Gastrocnemius medialis (tissue), 4 donors: ENCODE measurements at regions of chr3 and their contacts with region 1.

Region 1: DNA sequence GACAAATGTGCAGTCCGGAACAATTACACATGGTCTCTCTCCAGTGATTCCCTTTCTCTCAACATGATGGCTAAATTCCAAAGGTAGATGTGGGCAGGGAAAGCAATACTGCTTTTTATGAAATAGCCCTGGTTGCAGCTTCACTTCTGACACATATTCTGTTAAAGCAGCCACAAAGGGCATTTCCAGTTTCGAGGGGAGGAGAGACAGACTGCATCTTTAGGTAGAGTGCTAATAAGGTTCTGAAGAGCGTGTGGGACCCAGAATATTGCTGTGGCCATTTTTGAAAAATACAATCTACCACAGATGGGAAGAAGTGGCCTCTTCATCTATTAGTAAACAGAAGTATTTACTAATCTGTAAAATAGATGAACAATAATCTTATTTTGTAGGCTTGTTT is 139.3 kb upstream of the PEX5L start:
- DNase-seq: no peak
- ATAC-seq: no peak
- H3K4me3 ChIP-seq: no peak overlapping the region
- H3K27ac ChIP-seq: no peak overlapping the region
- H3K4me1 ChIP-seq: no peaks in the 10 kb centered on the region
- H3K27me3 ChIP-seq: no peaks in the 10 kb centered on the region
- CTCF ChIP-seq: no peak
- POLR2A ChIP-seq: no peak

Region 2: GRCh38 chr3:179969525-179969924 is 206.5 kb before region 1 on chr3:
- in situ Hi-C with region 1: no loop called
- intact Hi-C with region 1: no loop called
- DNase-seq: no peak
- ATAC-seq: no peak
- H3K4me3 ChIP-seq: no peak overlapping the region
- H3K27ac ChIP-seq: no peak overlapping the region
- H3K4me1 ChIP-seq: no peaks in the 10 kb centered on the region
- H3K27me3 ChIP-seq: no peaks in the 10 kb centered on the region
- CTCF ChIP-seq: no peak
- POLR2A ChIP-seq: no peak

Region 3: DNA sequence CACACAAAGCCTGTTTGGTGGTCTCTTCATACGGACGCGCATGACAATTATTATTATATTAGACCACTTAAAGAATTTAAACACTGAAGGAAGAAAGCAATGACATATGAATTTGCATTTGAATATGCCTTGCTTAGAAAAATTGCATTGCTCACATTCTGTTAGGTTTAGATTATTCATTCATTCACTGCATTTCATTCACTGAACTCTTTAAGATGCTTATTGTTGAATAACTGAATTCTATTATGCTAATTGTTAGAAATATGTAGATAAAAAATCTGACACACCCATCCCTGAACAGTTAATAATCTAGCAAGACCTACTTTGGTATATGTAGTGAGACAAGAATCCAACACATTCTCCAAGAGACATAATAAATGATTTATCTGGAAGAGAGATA is 44.9 kb before region 1 on chr3:
- in situ Hi-C with region 1: no loop called
- intact Hi-C with region 1: loop called (anchors 2 kb)
- DNase-seq: no peak
- ATAC-seq: no peak
- H3K4me3 ChIP-seq: no peak overlapping the region
- H3K27ac ChIP-seq: no peak overlapping the region
- H3K4me1 ChIP-seq: no peaks in the 10 kb centered on the region
- H3K27me3 ChIP-seq: no peaks in the 10 kb centered on the region
- CTCF ChIP-seq: no peak
- POLR2A ChIP-seq: no peak

Region 4: DNA sequence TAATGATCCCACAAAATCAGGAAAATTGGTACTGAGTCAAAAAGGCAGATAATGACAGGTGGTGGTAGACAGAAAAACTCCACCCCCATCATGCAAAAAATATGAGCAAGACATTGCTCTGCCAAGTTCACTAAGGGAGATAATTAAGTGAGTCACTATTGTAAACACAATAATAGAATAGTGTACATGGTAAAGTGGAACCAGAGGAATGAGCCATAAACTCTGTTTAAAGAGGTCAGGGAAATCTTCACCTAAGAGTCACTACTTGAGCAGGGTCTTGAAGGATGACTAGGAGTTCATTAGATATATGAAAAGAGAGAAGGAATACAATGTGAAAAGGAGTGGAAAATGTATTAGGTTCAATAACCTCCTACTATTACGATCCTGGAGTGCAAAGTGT is 74.1 kb after region 1 on chr3:
- in situ Hi-C with region 1: no loop called
- intact Hi-C with region 1: no loop called
- DNase-seq: no peak
- ATAC-seq: no peak
- H3K4me3 ChIP-seq: no peak overlapping the region
- H3K27ac ChIP-seq: no peak overlapping the region
- H3K4me1 ChIP-seq: no peaks in the 10 kb centered on the region
- H3K27me3 ChIP-seq: no peaks in the 10 kb centered on the region
- CTCF ChIP-seq: no peak
- POLR2A ChIP-seq: no peak

Region 5: GRCh38 chr3:180278583-180279188 is 102.6 kb after region 1 on chr3:
- in situ Hi-C with region 1: no loop called
- intact Hi-C with region 1: no loop called
- DNase-seq: no peak
- ATAC-seq: no peak
- H3K4me3 ChIP-seq: no peak overlapping the region
- H3K27ac ChIP-seq: no peak overlapping the region
- H3K4me1 ChIP-seq: no peaks in the 10 kb centered on the region
- H3K27me3 ChIP-seq: no peaks in the 10 kb centered on the region
- CTCF ChIP-seq: no peak
- POLR2A ChIP-seq: no peak